Gastrocnemius medialis (tissue), 4 donors: ENCODE measurements at regions of chr9 and their contacts with region 1.

Region 1: GRCh38 chr9:121545875-121546423 is 46.3 kb upstream of the GGTA1 start:
- DNase-seq: peak; percentile 86 to 92
- ATAC-seq: peak; percentile 81 to 82
- H3K4me3 ChIP-seq: peak overlapping the region; percentile 10 to 40 (median 35)
- H3K27ac ChIP-seq: peak overlapping the region in 1 of 4 donors; percentile 34
- H3K4me1 ChIP-seq: peaks cover 0 to 9% of the 10 kb centered on the region in 2 donors
- H3K27me3 ChIP-seq: no peaks in the 10 kb centered on the region
- CTCF ChIP-seq: peak; percentile 80 to 98 (median 96)
- POLR2A ChIP-seq: no peak

Region 2: DNA sequence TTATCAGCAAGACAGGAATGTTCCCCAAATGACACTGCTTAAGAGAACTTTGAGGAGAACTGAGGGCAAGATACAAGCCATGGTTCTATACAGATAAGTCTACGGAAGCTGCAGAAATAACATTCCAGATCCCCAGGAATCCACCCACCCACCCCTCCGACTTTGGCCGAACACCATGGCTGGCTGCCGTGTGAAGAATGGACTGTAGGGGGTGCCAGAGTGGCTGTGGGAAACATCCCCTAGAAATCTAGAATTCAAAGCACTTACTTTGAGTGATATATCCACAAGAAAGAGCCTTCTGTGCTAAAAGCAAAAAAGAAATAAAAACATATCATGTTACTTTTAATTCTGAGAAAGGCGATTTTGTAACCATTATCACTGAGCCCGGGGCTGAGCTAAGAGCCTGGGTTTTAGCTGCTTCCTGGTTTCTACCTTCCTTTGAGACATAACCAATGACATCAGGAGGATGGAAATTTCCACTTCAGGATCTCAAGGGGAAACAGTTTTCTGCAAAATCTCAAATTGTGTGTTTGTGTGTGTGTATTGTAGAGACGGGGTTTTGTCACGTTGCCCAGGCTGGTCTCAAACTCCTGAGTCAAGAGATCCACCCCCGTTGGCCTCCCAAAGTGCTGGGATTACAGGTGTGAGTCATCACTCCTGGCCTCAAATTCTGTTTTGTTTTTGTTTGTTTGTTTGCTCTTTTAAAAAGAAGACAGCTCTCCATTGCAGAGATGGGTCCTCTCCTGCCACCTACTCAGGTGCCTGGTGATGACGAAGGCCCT is 82.7 kb before region 1 on chr9:
- in situ Hi-C with region 1: no loop called
- intact Hi-C with region 1: loop called (anchors 10 kb)
- DNase-seq: no peak
- ATAC-seq: peak in 1 of 2 donors; percentile 53
- H3K4me3 ChIP-seq: no peak overlapping the region
- H3K27ac ChIP-seq: no peak overlapping the region
- H3K4me1 ChIP-seq: peaks cover 0 to 3% of the 10 kb centered on the region in 2 donors
- H3K27me3 ChIP-seq: peaks cover 0 to 4% (median 0%) of the 10 kb centered on the region in 3 donors
- CTCF ChIP-seq: peak in 3 of 5 experiments; percentile 36 to 73 (median 65)
- POLR2A ChIP-seq: no peak

Region 3: GRCh38 chr9:121576281-121577075 is 30.5 kb after region 1 on chr9:
- in situ Hi-C with region 1: no loop called
- intact Hi-C with region 1: loop called (anchors 1 kb)
- DNase-seq: peak in 1 of 2 donors; percentile 57
- ATAC-seq: peak; percentile 65 to 67
- H3K4me3 ChIP-seq: no peak overlapping the region
- H3K27ac ChIP-seq: peak overlapping the region; percentile 42 to 71 (median 60)
- H3K4me1 ChIP-seq: peaks cover 39 to 49% of the 10 kb centered on the region in 2 donors
- H3K27me3 ChIP-seq: no peaks in the 10 kb centered on the region
- CTCF ChIP-seq: peak in 4 of 5 experiments; percentile 6 to 33 (median 26)
- POLR2A ChIP-seq: no peak

Region 4: GRCh38 chr9:121634329-121635261 is 88.6 kb after region 1 on chr9:
- in situ Hi-C with region 1: no loop called
- intact Hi-C with region 1: loop called (anchors 2 kb)
- DNase-seq: no peak
- ATAC-seq: peak; percentile 22 to 27
- H3K4me3 ChIP-seq: no peak overlapping the region
- H3K27ac ChIP-seq: peak overlapping the region in 3 of 4 donors; percentile 22 to 37 (median 33)
- H3K4me1 ChIP-seq: peaks cover 60 to 79% of the 10 kb centered on the region in 2 donors
- H3K27me3 ChIP-seq: no peaks in the 10 kb centered on the region
- CTCF ChIP-seq: peak; percentile 11 to 60 (median 45)
- POLR2A ChIP-seq: no peak

Region 5: GRCh38 chr9:121692606-121693387 is 146.8 kb after region 1 on chr9:
- in situ Hi-C with region 1: loop called in 2 of 4 experiments (anchors 5 kb)
- intact Hi-C with region 1: loop called (anchors 5 kb)
- DNase-seq: no peak
- ATAC-seq: peak; percentile 28 to 60
- H3K4me3 ChIP-seq: no peak overlapping the region
- H3K27ac ChIP-seq: peak overlapping the region; percentile 41 to 63 (median 53)
- H3K4me1 ChIP-seq: peaks cover 17 to 26% of the 10 kb centered on the region in 2 donors
- H3K27me3 ChIP-seq: no peaks in the 10 kb centered on the region
- CTCF ChIP-seq: no peak
- POLR2A ChIP-seq: no peak

Region 6: GRCh38 chr9:121839726-121840500 is 294.0 kb after region 1 on chr9:
- in situ Hi-C with region 1: loop called in 1 of 4 experiments (anchors 25 kb)
- intact Hi-C with region 1: no loop called
- DNase-seq: no peak
- ATAC-seq: no peak
- H3K4me3 ChIP-seq: no peak overlapping the region
- H3K27ac ChIP-seq: no peak overlapping the region
- H3K4me1 ChIP-seq: peaks cover 0 to 4% of the 10 kb centered on the region in 2 donors
- H3K27me3 ChIP-seq: no peaks in the 10 kb centered on the region
- CTCF ChIP-seq: no peak
- POLR2A ChIP-seq: no peak

Region 7: GRCh38 chr9:122001491-122002201 is 455.7 kb after region 1 on chr9:
- in situ Hi-C with region 1: loop called in 2 of 4 experiments (anchors 5 to 10 kb)
- intact Hi-C with region 1: no loop called
- DNase-seq: peak; percentile 76 to 90
- ATAC-seq: peak; percentile 90 to 92
- H3K4me3 ChIP-seq: peak overlapping the region in 3 of 4 donors; percentile 13 to 16 (median 15)
- H3K27ac ChIP-seq: peak overlapping the region; percentile 85 to 94 (median 88)
- H3K4me1 ChIP-seq: peaks cover 29 to 30% of the 10 kb centered on the region in 2 donors
- H3K27me3 ChIP-seq: no peaks in the 10 kb centered on the region
- CTCF ChIP-seq: no peak
- POLR2A ChIP-seq: no peak